ENCODE measurements at regions of chr6 and their contacts with region 1.

Region 1: DNA sequence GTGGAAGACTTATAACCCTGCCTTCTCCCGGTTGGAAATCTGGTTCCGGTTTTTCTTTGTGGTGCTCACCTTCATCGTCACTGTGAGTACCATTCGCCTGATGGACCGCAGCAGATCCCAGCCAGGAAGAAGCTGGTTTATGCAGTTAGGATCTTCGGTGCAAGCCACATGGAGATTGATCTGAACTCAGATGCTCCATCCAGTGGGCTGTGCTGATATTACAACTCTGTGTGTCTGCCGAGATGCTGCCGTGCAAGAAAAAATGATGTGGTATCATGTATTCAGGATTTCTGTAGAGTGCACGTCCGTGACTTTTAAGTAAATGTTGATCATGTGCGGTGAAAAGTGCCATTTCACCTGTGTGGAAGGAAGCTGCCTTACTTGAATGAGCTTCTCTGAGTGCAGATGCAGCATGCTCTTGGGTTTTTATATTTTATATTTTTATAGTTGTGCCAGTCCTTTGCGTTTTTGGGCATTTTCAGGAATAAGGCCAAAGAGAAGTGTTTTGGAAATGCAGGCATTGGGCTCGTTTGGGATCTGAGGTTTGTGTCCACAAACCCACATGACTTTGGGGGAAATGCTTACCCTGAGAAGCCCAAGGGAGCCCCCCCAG is 39.2 kb downstream of the DYNLT1 start:
- DNase-seq: peak; percentile 83
- H3K4me3 ChIP-seq: no peak overlapping the region
- H3K27ac ChIP-seq: no peak overlapping the region
- H3K4me1 ChIP-seq: no peaks in the 10 kb centered on the region
- H3K27me3 ChIP-seq: no peaks in the 10 kb centered on the region
- CTCF ChIP-seq: peak; percentile 79

Region 2: GRCh38 chr6:158213925-158214674 is 391.3 kb before region 1 on chr6:
- CTCF ChIA-PET with region 1: interaction called, 13 read pairs
- POLR2A ChIA-PET with region 1: no interaction called
- intact Hi-C with region 1: no loop called
- DNase-seq: peak; percentile 84
- H3K4me3 ChIP-seq: no peak overlapping the region
- H3K27ac ChIP-seq: no peak overlapping the region
- H3K4me1 ChIP-seq: no peaks in the 10 kb centered on the region
- H3K27me3 ChIP-seq: no peaks in the 10 kb centered on the region
- CTCF ChIP-seq: peak; percentile 90

Region 3: DNA sequence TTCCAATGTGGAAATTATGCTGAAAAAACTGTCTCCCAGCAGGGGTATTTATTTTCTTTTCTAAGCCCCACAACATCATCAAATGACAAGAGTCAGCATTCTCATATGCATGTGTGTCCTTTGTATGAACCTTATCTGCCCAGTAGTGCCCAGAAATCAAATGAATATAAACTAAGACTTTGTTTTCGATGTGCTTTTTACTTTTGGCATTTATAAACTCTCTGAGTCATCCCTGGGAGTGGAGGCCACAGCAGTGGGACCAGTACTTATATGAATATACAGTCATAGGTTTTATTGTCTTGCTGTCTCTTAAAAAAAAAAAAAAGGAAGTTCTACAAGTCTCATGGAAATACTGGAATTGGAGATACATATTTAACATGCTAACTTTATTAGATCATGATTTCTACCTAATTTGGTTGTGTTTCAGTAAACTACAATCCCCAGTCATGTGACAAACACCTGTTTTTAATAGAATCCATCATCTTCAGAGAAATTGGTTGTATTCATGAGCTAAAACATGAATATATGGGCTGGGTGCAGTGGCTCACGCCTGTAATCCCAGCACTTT is 144.7 kb before region 1 on chr6:
- CTCF ChIA-PET with region 1: no interaction called
- POLR2A ChIA-PET with region 1: no interaction called
- intact Hi-C with region 1: loop called (anchors 10 kb)
- DNase-seq: peak; percentile 58
- H3K4me3 ChIP-seq: no peak overlapping the region
- H3K27ac ChIP-seq: peak overlapping the region; percentile 46
- H3K4me1 ChIP-seq: peaks cover 14% of the 10 kb centered on the region
- H3K27me3 ChIP-seq: no peaks in the 10 kb centered on the region
- CTCF ChIP-seq: no peak

Region 4: DNA sequence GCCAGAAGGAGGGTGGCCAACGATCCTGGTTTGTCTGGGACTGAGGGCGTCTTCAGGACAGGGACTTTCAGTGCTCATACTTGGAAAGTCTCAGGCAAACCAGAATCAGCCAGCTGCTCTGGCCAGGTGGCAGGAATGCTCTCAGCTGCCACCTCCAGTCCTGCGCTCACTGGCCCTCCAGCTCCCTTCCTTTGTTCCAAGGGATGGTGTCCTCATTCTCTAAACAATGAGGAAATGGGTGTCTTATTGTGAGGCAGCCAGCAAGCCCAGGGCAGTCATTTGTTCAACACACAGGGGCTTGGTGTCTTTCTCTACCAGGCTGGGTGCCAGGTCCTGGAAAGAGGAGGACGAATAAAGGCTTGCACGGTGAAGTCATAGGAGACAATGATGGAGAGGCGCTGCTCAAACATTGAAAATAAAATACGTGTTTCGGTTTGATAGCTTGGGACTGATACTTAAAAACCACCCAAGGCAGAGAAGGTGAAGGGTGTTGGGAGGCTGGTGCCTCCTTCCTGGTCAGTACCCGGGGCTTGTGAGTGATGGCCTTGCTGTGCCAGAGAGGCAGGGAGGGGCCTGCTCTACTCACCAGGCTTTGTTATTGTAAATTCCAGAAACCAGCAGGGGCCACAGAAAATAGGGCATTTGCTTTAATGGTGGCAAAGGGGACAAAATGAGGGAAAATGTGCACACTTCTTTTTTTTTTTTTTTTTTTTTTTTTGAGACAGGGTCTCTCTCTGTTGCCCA is 56.8 kb before region 1 on chr6:
- CTCF ChIA-PET with region 1: no interaction called
- POLR2A ChIA-PET with region 1: interaction called, 11 read pairs
- intact Hi-C with region 1: no loop called
- DNase-seq: no peak
- H3K4me3 ChIP-seq: no peak overlapping the region
- H3K27ac ChIP-seq: no peak overlapping the region
- H3K4me1 ChIP-seq: no peaks in the 10 kb centered on the region
- H3K27me3 ChIP-seq: no peaks in the 10 kb centered on the region
- CTCF ChIP-seq: no peak

Region 5: DNA sequence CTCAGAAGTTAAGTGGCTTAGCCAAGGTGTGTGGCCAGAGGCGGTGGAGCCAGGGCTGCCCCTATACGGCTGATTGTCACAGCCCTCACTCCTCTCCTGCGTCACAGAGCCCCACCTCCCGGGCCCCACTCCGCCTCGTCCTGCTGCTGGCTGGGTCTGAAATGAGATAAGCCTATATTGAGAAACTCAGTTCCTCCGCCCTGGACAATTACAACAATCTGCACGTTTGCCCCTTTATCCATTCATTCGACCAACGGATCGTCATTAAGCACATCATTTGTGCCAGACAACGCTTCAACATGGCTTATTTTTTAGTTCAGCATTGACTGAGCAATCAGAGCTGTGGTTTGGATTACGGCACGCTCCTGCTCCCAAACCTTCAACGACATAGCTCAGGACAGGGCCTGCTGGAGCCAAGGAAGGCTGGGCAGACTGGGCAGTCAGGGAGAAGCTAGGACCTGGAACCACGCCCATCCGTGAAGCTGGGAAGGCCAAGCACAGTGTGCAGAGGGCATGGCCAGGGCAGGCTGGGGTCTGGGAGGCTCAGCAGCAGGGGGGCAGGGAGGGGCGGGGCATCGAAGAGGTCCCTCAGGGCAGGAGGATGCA is 230.3 kb after region 1 on chr6:
- CTCF ChIA-PET with region 1: no interaction called
- POLR2A ChIA-PET with region 1: no interaction called
- intact Hi-C with region 1: no loop called
- DNase-seq: no peak
- H3K4me3 ChIP-seq: no peak overlapping the region
- H3K27ac ChIP-seq: no peak overlapping the region
- H3K4me1 ChIP-seq: no peaks in the 10 kb centered on the region
- H3K27me3 ChIP-seq: no peaks in the 10 kb centered on the region
- CTCF ChIP-seq: no peak

Region 6: DNA sequence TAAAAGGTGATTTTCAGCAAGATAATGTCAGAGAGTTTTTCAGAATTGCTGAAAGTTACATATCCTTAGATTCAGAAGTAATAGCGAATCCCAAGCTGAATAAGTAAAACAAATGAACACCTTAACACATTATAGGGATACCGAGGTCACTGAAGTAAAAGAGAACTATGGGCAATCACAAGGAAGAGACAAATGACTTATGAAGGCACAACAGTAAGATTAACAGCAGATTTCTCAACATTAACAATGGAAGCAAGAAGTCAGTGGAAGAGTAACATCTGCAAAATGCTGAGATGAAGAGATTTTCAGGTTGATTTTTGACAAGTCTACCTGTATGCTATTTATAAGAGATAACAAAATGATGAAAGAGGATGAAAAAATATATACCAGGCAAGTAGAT is 299.9 kb after region 1 on chr6:
- CTCF ChIA-PET with region 1: no interaction called
- POLR2A ChIA-PET with region 1: no interaction called
- intact Hi-C with region 1: no loop called
- DNase-seq: no peak
- H3K4me3 ChIP-seq: no peak overlapping the region
- H3K27ac ChIP-seq: no peak overlapping the region
- H3K4me1 ChIP-seq: no peaks in the 10 kb centered on the region
- H3K27me3 ChIP-seq: no peaks in the 10 kb centered on the region
- CTCF ChIP-seq: no peak

Region 7: GRCh38 chr6:158972241-158973233 is 367.2 kb after region 1 on chr6:
- CTCF ChIA-PET with region 1: no interaction called
- POLR2A ChIA-PET with region 1: no interaction called
- intact Hi-C with region 1: no loop called
- DNase-seq: peak; percentile 67
- H3K4me3 ChIP-seq: no peak overlapping the region
- H3K27ac ChIP-seq: no peak overlapping the region
- H3K4me1 ChIP-seq: no peaks in the 10 kb centered on the region
- H3K27me3 ChIP-seq: no peaks in the 10 kb centered on the region
- CTCF ChIP-seq: peak; percentile 66; the same call in 1 of the 2 replicates

Measured in A673 (cell line).